ENCODE measurements at regions of chr1 and their contacts with region 1.

Region 1: DNA sequence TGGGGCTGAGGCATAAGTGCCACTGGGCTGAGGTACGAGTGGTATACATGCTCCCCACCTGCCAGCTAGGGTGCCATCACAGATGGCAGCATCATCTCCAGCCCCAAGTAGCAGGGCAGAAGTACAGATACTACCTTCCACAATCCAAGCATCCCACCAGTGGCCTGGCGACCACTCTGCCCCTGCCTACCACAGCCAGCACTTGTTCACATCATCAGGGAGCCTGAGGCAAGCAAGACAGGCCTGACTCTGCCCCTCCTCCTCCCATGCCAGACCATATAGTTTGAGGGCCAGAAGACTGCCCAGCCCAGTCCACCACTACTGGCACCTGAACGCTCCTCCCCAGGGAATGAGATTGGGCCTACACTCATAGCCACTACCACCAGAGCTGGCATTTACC is 84.6 kb downstream of the SPATA6 start:
- DNase-seq: no peak
- H3K4me3 ChIP-seq: no peak overlapping the region
- H3K27me3 ChIP-seq: no peaks in the 10 kb centered on the region
- CTCF ChIP-seq: no peak

Region 2: GRCh38 chr1:48405400-48405799 is 18.0 kb after region 1 on chr1:
- CTCF ChIA-PET with region 1: interaction called, 4 read pairs
- POLR2A ChIA-PET with region 1: interaction called, 10 read pairs
- DNase-seq: peak; percentile 6
- H3K4me3 ChIP-seq: no peak overlapping the region
- H3K27me3 ChIP-seq: no peaks in the 10 kb centered on the region
- CTCF ChIP-seq: no peak

Region 3: GRCh38 chr1:48506870-48507269 is 119.5 kb after region 1 on chr1:
- CTCF ChIA-PET with region 1: no interaction called
- POLR2A ChIA-PET with region 1: no interaction called
- DNase-seq: no peak
- H3K4me3 ChIP-seq: no peak overlapping the region
- H3K27me3 ChIP-seq: no peaks in the 10 kb centered on the region
- CTCF ChIP-seq: no peak

Region 4: GRCh38 chr1:48741395-48741794 is 354.0 kb after region 1 on chr1:
- CTCF ChIA-PET with region 1: no interaction called
- POLR2A ChIA-PET with region 1: no interaction called
- DNase-seq: no peak
- H3K4me3 ChIP-seq: no peak overlapping the region
- H3K27me3 ChIP-seq: no peaks in the 10 kb centered on the region
- CTCF ChIP-seq: no peak